ENCODE measurements at regions of chr20 and their contacts with region 1.

Region 1: DNA sequence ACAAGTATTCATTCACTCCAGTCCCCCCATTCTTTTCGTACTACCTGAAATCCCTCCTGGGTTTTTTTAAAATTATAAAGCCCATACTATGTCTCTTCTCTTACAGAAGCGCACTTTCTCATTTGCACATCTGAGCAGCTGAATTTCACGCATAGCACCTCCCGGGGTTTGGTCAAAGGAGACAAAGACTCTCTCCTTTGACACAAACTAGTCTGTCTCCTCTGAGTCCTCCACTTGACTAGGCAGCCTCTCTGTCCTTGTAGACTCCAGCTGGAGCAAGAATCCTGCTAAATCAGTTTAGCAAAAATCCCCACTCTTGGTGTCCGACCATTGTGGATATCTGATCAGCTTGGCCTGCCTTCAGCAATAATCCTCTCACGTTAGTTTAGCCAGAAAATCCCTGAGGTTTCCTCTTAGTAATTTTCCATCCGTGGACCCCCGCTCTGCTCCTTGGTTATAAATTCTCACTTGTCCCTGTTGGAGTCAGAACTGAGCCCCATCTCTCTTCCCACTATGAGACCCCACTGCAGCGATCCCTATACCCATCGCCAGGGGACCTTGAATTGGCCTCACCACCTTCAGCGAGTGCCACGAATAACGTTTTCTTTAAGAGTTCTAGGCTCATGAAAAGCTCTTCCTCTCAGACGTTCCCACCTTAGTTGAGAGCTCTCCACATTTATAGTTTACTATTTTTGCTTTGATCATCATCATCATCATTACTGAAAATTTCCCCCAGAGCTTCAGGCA is 29.0 kb downstream of the PDYN start:
- DNase-seq: no peak
- ATAC-seq: peak; percentile 12
- H3K4me3 ChIP-seq: peak overlapping the region in 1 of 2 donors; percentile 13
- H3K27ac ChIP-seq: peak overlapping the region in 1 of 2 donors; percentile 84
- H3K4me1 ChIP-seq: peaks cover 0 to 29% of the 10 kb centered on the region in 2 donors
- H3K27me3 ChIP-seq: peaks cover 0 to 39% of the 10 kb centered on the region in 2 donors
- CTCF ChIP-seq: no peak

Region 2: DNA sequence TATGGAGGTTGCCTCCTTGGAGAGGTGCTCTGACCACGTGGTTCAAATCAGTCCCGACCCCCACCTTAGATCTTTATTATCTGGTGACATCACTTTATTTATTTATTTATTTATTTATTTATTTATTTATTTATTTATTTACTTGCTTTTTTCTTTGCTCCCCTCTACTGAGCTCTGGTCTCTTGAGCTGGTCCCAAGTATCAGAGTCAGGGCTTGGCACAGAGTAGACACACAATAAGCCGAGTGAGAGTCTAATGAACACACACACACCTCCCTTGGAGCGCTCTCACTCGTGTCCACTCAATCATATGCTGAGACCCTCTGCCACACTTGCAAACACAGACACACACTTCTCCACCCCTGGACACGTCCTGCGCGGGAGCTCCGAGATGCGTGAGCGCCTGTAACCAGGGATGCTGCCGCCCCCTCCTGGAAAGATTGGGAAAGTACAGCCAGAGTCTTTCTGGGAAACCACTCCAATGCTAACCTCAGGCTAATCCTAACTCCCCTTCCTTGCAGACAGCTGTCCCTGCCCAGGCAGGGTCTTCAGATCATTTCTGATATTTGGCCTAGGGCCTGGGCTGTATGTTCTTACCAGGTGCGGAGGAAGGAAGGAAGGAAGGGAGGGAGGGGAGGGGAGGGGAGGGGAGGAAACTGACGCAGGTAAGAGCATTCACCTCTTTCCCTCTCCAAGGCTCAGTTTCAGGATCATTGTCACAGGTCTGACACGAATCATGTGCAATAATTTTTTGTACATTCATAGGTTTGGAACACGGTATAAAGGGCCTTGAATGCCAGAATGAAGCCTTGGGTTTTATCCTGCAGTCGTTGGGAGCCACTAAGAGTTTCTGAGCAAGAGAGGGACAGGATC is 207.7 kb after region 1 on chr20:
- intact Hi-C with region 1: loop called in 1 of 2 experiments (anchors 5 kb)
- DNase-seq: peak; percentile 65 to 85 (median 74)
- ATAC-seq: peak; percentile 96
- H3K4me3 ChIP-seq: no peak overlapping the region
- H3K27ac ChIP-seq: no peak overlapping the region
- H3K4me1 ChIP-seq: peaks cover 0 to 5% of the 10 kb centered on the region in 2 donors
- H3K27me3 ChIP-seq: peaks cover 0 to 28% of the 10 kb centered on the region in 2 donors
- CTCF ChIP-seq: peak; percentile 81 to 85

Region 3: GRCh38 chr20:2183381-2183780 is 218.5 kb after region 1 on chr20:
- intact Hi-C with region 1: no loop called
- DNase-seq: no peak
- ATAC-seq: no peak
- H3K4me3 ChIP-seq: no peak overlapping the region
- H3K27ac ChIP-seq: no peak overlapping the region
- H3K4me1 ChIP-seq: no peaks in the 10 kb centered on the region
- H3K27me3 ChIP-seq: peaks cover 0 to under 1% of the 10 kb centered on the region in 2 donors
- CTCF ChIP-seq: no peak

Region 4: DNA sequence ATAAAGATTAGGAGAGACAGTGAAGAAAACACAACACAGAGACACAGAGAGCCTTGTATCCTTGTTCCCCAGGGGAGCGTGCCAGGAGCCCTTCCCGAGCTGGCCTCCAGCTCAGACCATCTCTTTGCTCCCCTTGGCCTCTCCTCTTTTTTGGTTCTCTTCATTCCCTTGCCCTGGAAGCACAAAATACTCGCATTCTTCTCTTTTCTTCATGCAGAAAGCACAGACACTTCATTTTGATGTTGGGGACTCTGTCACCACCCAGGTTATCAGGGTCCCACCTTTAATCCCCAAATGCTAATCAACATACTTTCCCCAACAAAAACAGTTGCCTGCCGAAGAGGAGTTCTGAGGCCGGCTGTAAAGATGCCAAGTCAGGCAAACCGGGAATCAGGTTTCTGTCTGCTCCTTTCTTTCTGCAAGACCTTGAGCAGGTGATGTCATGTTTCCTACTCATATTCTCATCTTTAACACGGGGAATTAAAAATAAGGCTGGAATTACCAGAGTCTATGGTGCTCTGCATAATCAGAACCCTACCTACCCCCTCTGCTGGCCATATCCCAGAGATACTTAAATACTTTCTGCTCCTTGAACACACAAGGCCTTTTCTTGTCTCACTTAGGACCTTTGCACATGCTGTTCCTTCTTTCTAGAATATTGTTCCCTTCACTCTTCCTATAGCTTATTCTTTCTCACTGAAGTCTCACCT is 437.6 kb after region 1 on chr20:
- intact Hi-C with region 1: no loop called
- DNase-seq: peak in 1 of 4 donors; percentile 7
- ATAC-seq: no peak
- H3K4me3 ChIP-seq: no peak overlapping the region
- H3K27ac ChIP-seq: no peak overlapping the region
- H3K4me1 ChIP-seq: no peaks in the 10 kb centered on the region
- H3K27me3 ChIP-seq: peaks cover 0 to 16% of the 10 kb centered on the region in 2 donors
- CTCF ChIP-seq: no peak